ENCODE measurements at regions of chr11 and their contacts with region 1.

Region 1: DNA sequence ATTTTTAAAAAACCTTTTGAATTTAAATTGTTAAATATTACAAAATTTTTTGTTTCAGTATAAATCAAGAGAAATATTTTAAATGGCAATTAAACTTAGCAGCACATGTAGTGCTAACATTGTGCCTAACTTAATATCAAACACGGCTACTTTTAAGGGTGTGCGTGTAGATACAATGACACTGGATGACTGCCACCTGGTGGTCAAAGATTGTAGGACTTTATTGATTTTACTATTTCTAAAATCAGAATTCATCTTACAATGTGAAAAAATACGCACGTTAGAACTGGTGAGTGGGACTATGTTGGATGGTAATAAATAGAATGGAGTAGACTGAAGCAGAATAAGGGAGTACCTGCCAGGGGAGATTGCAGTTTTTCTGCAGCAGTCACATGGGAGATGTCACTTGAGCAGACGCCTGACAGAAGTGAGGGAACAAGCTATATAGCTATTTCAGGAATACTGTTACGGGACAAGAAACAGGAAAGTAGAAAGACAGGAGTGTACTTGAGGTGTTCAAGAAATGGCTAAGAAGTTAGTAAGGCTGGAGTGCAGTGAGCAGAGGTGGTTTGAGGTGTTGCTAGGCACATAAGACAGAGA is 52.9 kb downstream of the UVRAG start:
- DNase-seq: peak; percentile 24
- ATAC-seq: peak; percentile 84
- H3K4me3 ChIP-seq: no peak overlapping the region
- H3K27ac ChIP-seq: no peak overlapping the region
- H3K4me1 ChIP-seq: peaks cover 15% of the 10 kb centered on the region
- H3K27me3 ChIP-seq: no peaks in the 10 kb centered on the region
- CTCF ChIP-seq: peak; percentile 50 to 65 (median 65); a peak in 5 of 6 replicates
- EP300 ChIP-seq: no peak
- POLR2A ChIP-seq: no peak
- RAD21 ChIP-seq: peak; percentile 84

Region 2: DNA sequence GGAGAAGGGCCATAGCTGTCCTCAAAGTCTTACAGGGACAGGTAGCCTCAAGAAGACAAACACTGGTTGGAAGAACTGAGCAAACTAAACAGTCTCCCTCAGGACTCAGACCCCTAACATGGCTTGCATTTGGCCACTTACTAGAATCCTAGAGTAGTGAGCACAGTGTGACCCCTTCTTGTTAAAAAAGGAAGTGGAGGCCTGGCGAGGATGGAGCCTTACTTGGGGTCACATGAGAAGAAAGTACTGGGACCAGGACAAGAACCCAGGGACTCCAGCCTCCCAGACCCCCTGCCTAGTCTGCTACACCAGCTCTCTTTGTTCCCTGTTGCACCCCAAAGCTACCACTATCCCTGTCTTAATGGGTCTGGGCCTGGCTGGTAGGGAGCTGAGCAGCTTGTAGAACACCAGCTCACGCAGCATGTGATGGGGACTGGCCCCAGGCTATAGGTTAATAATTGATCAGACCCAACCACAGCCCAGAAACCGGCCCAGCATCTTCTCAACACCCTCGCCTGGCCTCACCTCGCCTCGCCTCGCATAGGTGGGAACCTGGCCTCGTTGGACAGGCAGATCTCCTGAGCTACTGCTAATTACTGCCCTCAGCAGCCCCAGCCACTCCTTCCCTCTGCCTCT is 81.7 kb before region 1 on chr11:
- CTCF ChIA-PET with region 1: interaction called, 6 read pairs
- POLR2A ChIA-PET with region 1: no interaction called
- RAD21 ChIA-PET with region 1: interaction called, 3 read pairs
- SMC1A ChIA-PET with region 1: interaction called, 10 read pairs
- in situ Hi-C with region 1: no loop called
- intact Hi-C with region 1: no loop called
- DNase-seq: no peak
- ATAC-seq: peak; percentile 96
- H3K4me3 ChIP-seq: no peak overlapping the region
- H3K27ac ChIP-seq: no peak overlapping the region
- H3K4me1 ChIP-seq: no peaks in the 10 kb centered on the region
- H3K27me3 ChIP-seq: no peaks in the 10 kb centered on the region
- CTCF ChIP-seq: no peak
- EP300 ChIP-seq: no peak
- POLR2A ChIP-seq: no peak
- RAD21 ChIP-seq: no peak

Region 3: DNA sequence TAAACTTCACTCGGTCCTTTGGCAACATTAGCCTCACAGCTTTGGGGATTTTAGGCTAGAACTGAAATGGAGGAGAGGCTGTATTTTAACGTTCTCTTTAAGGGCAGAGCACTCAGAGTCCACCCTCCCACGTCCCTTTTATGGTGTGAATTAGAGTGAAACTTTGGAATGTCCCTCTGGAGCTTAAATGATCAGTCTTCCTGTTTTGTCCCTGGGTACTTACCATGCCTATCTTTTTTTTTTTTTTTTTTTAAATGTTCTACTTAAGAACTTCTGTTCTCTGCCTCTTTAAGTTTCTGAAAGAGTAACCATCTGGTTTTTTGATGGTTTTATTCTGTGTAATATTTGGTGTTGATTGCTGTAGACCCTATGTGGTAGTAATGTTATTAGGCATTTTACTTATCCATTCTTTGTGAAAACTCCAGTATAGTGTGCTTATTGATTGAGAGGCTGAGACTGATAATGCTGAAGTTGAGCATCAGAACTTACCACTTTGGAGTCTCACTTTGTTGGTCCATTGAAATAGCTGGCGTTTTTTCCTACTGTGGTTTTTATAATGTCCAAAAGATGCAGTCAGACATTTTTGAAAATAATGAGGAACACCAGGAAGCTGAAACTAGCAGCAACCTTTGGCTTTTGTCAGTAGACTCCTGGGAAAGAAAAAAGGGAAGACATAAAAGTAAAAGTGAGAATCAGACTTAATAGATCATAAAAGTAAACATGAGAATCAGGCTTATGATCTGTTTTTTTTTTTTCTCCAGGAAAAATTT is 41.2 kb before region 1 on chr11:
- CTCF ChIA-PET with region 1: interaction called, 131 read pairs
- POLR2A ChIA-PET with region 1: interaction called, 10 read pairs
- RAD21 ChIA-PET with region 1: interaction called, 12 read pairs
- SMC1A ChIA-PET with region 1: interaction called, 78 read pairs
- in situ Hi-C with region 1: no loop called
- intact Hi-C with region 1: no loop called
- DNase-seq: no peak
- ATAC-seq: peak; percentile 11
- H3K4me3 ChIP-seq: peak overlapping the region; percentile 63; the same call in 1 of the 2 replicates
- H3K27ac ChIP-seq: peak overlapping the region; percentile 92
- H3K4me1 ChIP-seq: peaks cover 35% of the 10 kb centered on the region
- H3K27me3 ChIP-seq: no peaks in the 10 kb centered on the region
- CTCF ChIP-seq: no peak
- EP300 ChIP-seq: no peak
- POLR2A ChIP-seq: no peak
- RAD21 ChIP-seq: no peak

Region 4: GRCh38 chr11:75850787-75851186 is 17.1 kb before region 1 on chr11:
- CTCF ChIA-PET with region 1: interaction called, 26 read pairs
- POLR2A ChIA-PET with region 1: interaction called, 4 read pairs
- RAD21 ChIA-PET with region 1: interaction called, 9 read pairs
- SMC1A ChIA-PET with region 1: interaction called, 7 read pairs
- in situ Hi-C with region 1: no loop called
- intact Hi-C with region 1: no loop called
- DNase-seq: no peak
- ATAC-seq: peak; percentile 54
- H3K4me3 ChIP-seq: no peak overlapping the region
- H3K27ac ChIP-seq: peak overlapping the region; percentile 46; the same call in 1 of the 2 replicates
- H3K4me1 ChIP-seq: peaks cover 7% of the 10 kb centered on the region
- H3K27me3 ChIP-seq: no peaks in the 10 kb centered on the region
- CTCF ChIP-seq: no peak
- EP300 ChIP-seq: no peak
- POLR2A ChIP-seq: no peak
- RAD21 ChIP-seq: no peak

Region 5: DNA sequence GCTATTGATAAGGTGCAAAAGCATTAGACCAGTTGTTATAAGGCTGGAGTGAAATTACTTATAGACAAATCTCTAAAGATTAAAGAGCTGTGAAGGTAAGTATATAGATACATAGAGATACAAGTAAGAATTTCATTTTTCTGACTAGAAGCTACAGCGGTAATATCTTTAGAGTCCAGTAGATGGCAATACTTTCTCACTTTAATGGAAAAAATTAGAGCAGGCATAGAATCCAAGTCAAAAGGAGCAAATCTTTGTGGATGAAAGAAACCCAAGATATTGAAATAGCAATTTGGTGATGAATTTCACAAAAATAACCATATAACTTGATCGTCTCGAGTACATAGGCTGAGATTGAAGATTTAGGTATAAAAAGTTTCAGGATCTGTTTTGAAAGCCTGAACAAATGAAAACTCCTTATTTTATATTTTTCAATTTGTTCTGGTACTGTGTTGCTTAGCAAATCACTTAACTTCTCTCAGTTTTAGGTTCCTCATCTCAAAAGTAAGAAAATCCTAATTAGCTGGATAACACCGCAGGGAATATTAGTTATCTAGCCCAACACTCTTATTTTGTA is 29.1 kb after region 1 on chr11:
- CTCF ChIA-PET with region 1: interaction called, 17 read pairs
- POLR2A ChIA-PET with region 1: interaction called, 6 read pairs
- RAD21 ChIA-PET with region 1: interaction called, 13 read pairs
- SMC1A ChIA-PET with region 1: interaction called, 32 read pairs
- in situ Hi-C with region 1: no loop called
- intact Hi-C with region 1: no loop called
- DNase-seq: no peak
- ATAC-seq: peak; percentile 46
- H3K4me3 ChIP-seq: no peak overlapping the region
- H3K27ac ChIP-seq: no peak overlapping the region
- H3K4me1 ChIP-seq: peaks cover 8% of the 10 kb centered on the region
- H3K27me3 ChIP-seq: no peaks in the 10 kb centered on the region
- CTCF ChIP-seq: peak; percentile 55 to 62 (median 57)
- EP300 ChIP-seq: no peak
- POLR2A ChIP-seq: no peak
- RAD21 ChIP-seq: peak; percentile 77

Region 6: GRCh38 chr11:76524919-76525318 is 657.0 kb after region 1 on chr11:
- CTCF ChIA-PET with region 1: no interaction called
- POLR2A ChIA-PET with region 1: no interaction called
- RAD21 ChIA-PET with region 1: no interaction called
- SMC1A ChIA-PET with region 1: no interaction called
- in situ Hi-C with region 1: no loop called
- intact Hi-C with region 1: no loop called
- DNase-seq: no peak
- ATAC-seq: no peak
- H3K4me3 ChIP-seq: no peak overlapping the region
- H3K27ac ChIP-seq: no peak overlapping the region
- H3K4me1 ChIP-seq: no peaks in the 10 kb centered on the region
- H3K27me3 ChIP-seq: no peaks in the 10 kb centered on the region
- CTCF ChIP-seq: no peak
- EP300 ChIP-seq: no peak
- POLR2A ChIP-seq: no peak
- RAD21 ChIP-seq: no peak